ENCODE measurements at regions of chr11 and their contacts with region 1.

Region 1: DNA sequence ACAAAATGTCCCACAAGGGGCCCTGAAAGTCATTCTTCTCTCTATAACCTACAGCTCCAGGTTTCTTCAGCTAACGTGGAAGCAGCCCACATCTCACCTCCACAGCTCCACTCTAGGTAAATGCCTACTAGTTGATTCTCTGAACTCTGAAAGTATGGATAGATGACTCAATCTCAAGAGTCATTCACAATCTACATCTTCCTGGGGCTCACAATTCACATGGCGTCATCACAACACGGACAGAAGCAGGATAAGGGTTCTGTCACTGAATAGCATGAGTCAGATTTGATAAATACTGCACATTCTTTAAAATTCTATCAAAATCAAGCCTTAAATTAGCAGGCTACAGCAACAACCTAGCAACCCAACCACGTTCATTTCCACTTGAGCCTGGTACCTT is 96.3 kb downstream of the PLEKHA7 start:
- DNase-seq: peak; percentile 71
- ATAC-seq: peak; percentile 55
- H3K4me3 ChIP-seq: peak overlapping the region; percentile 33; the same call in 1 of the 2 replicates
- H3K27ac ChIP-seq: peak overlapping the region; percentile 88
- H3K4me1 ChIP-seq: peaks cover 39% of the 10 kb centered on the region
- H3K27me3 ChIP-seq: no peaks in the 10 kb centered on the region
- CTCF ChIP-seq: no peak

Region 2: GRCh38 chr11:16843294-16843693 is 74.6 kb before region 1 on chr11:
- CTCF ChIA-PET with region 1: no interaction called
- POLR2A ChIA-PET with region 1: no interaction called
- intact Hi-C with region 1: no loop called
- DNase-seq: peak; percentile 24
- ATAC-seq: no peak
- H3K4me3 ChIP-seq: no peak overlapping the region
- H3K27ac ChIP-seq: no peak overlapping the region
- H3K4me1 ChIP-seq: no peaks in the 10 kb centered on the region
- H3K27me3 ChIP-seq: no peaks in the 10 kb centered on the region
- CTCF ChIP-seq: no peak

Region 3: GRCh38 chr11:16936643-16937042 is 18.7 kb after region 1 on chr11:
- CTCF ChIA-PET with region 1: interaction called, 8 read pairs
- POLR2A ChIA-PET with region 1: interaction called, 11 read pairs
- intact Hi-C with region 1: no loop called
- DNase-seq: no peak
- ATAC-seq: no peak
- H3K4me3 ChIP-seq: no peak overlapping the region
- H3K27ac ChIP-seq: no peak overlapping the region
- H3K4me1 ChIP-seq: no peaks in the 10 kb centered on the region
- H3K27me3 ChIP-seq: no peaks in the 10 kb centered on the region
- CTCF ChIP-seq: no peak